ENCODE measurements at regions of chr6 and their contacts with region 1.

Region 1: GRCh38 chr6:36759148-36759759 is 61.6 kb downstream of the RAB44 start:
- DNase-seq: no peak
- H3K4me3 ChIP-seq: no peak overlapping the region
- H3K27ac ChIP-seq: no peak overlapping the region
- H3K4me1 ChIP-seq: peaks cover 25% of the 10 kb centered on the region
- H3K27me3 ChIP-seq: peaks cover 6% of the 10 kb centered on the region
- CTCF ChIP-seq: peak in 2 of 3 experiments; percentile 94 to 96

Region 2: GRCh38 chr6:36615018-36615761 is 144.1 kb before region 1 on chr6:
- dilution Hi-C with region 1: loop called (anchors 10 kb)
- DNase-seq: no peak
- H3K4me3 ChIP-seq: no peak overlapping the region
- H3K27ac ChIP-seq: no peak overlapping the region
- H3K4me1 ChIP-seq: peaks cover 14% of the 10 kb centered on the region
- H3K27me3 ChIP-seq: no peaks in the 10 kb centered on the region
- CTCF ChIP-seq: peak; percentile 66 to 72 (median 71)

Measured in keratinocyte (primary cell).